Heart right ventricle (tissue), 16 donors: ENCODE measurements at regions of chr5 and their contacts with region 1.

Region 1: GRCh38 chr5:166262395-166262794 is 2029.0 kb upstream of the WWC1 start:
- DNase-seq: no peak
- ATAC-seq: no peak
- H3K4me3 ChIP-seq: no peak overlapping the region
- H3K27ac ChIP-seq: no peak overlapping the region
- H3K4me1 ChIP-seq: no peaks in the 10 kb centered on the region
- H3K27me3 ChIP-seq: no peaks in the 10 kb centered on the region
- CTCF ChIP-seq: no peak

Region 2: DNA sequence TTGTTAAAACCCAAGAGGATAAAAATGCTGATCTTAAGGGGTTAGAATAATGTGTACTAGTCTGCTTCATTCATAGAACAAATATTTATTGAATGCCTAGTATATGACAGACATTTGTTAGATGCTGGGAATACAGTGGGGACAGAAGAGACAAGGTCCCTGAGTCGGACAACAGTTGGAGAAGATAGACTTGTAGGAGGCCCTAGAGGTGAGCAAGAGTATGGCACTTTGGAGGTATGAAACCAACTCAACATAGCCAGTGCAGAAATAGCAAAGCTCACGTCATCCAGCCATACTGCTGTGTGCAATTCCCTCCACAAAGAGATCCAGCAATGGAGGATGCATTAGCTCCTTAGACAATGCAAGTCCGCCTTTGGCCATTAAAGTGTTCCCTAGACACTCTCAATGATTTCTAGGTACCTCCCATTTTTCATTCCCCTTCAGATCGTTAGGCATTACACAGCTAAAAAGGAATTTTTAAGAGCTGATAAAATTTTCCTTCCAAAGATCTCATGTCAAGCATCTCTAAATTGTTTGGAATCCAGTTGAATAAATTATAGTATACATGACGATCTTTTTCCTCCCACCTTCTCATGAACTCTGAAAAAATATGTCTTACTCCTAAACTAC is 79.4 kb after region 1 on chr5:
- intact Hi-C with region 1: no loop called
- DNase-seq: no peak
- ATAC-seq: peak in 1 of 8 donors; percentile 41
- H3K4me3 ChIP-seq: no peak overlapping the region
- H3K27ac ChIP-seq: no peak overlapping the region
- H3K4me1 ChIP-seq: no peaks in the 10 kb centered on the region
- H3K27me3 ChIP-seq: no peaks in the 10 kb centered on the region
- CTCF ChIP-seq: peak in 1 of 9 donors; percentile 10

Region 3: DNA sequence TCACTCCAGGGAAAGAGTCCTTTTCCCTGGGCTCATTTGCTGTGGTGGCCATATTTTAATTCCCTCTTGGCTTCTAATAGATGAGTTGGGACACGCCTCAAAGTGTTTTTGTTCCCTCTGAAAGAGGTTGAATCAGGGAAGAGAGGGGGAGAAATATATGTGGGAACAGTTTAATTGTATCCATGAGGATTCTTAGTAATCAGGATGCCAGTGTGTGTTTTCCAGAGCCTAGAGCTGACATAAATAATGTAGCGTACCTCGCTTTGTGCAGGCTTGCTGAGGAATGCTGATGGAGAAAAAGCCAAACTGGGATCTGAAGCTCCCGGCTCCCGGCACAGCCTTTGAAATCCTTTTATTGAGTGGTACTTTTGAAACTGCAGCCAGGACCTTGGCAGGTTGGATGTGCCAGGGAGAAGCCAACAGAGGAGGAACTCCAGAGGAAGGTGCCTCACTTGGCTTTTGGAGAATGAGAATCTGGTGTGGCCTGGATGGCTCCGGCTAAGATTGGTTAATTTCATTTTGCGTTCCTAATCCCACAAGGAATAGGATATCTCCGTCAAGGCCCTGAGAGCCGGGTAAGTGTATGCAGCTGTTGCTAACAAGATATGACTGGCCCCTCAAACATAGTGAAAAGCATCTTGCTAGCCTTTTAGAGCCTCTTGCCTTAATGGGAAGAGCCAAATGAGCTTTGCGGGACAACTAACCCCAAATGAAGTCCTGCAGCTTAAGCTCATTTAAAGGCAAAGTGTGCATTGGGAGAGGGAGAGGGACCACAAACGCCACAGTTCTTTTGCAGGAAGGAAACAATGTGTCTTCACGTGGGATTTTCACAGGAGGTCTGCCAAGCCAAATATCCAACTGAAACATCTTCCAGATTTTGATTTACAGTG is 1558.0 kb after region 1 on chr5:
- intact Hi-C with region 1: loop called in 1 of 10 experiments (anchors 5 kb)
- DNase-seq: no peak
- ATAC-seq: no peak
- H3K4me3 ChIP-seq: no peak overlapping the region
- H3K27ac ChIP-seq: no peak overlapping the region
- H3K4me1 ChIP-seq: peaks cover 0 to 4% (median 0%) of the 10 kb centered on the region in 9 donors
- H3K27me3 ChIP-seq: peaks cover 0 to 16% (median 0%) of the 10 kb centered on the region in 7 donors
- CTCF ChIP-seq: no peak